Psoas muscle (tissue), 8 donors: ENCODE measurements at regions of chr11 and their contacts with region 1.

Region 1: GRCh38 chr11:107676336-107677057 is 35.4 kb downstream of the SLN start:
- DNase-seq: no peak
- ATAC-seq: no peak
- H3K4me3 ChIP-seq: no peak overlapping the region
- H3K27ac ChIP-seq: no peak overlapping the region
- H3K4me1 ChIP-seq: no peaks in the 10 kb centered on the region
- H3K27me3 ChIP-seq: no peaks in the 10 kb centered on the region
- CTCF ChIP-seq: no peak

Region 2: GRCh38 chr11:107631931-107632330 is 44.6 kb before region 1 on chr11:
- intact Hi-C with region 1: loop called in 1 of 2 experiments (anchors 5 kb)
- DNase-seq: no peak
- ATAC-seq: no peak
- H3K4me3 ChIP-seq: no peak overlapping the region
- H3K27ac ChIP-seq: no peak overlapping the region
- H3K4me1 ChIP-seq: no peaks in the 10 kb centered on the region
- H3K27me3 ChIP-seq: no peaks in the 10 kb centered on the region
- CTCF ChIP-seq: no peak

Region 3: DNA sequence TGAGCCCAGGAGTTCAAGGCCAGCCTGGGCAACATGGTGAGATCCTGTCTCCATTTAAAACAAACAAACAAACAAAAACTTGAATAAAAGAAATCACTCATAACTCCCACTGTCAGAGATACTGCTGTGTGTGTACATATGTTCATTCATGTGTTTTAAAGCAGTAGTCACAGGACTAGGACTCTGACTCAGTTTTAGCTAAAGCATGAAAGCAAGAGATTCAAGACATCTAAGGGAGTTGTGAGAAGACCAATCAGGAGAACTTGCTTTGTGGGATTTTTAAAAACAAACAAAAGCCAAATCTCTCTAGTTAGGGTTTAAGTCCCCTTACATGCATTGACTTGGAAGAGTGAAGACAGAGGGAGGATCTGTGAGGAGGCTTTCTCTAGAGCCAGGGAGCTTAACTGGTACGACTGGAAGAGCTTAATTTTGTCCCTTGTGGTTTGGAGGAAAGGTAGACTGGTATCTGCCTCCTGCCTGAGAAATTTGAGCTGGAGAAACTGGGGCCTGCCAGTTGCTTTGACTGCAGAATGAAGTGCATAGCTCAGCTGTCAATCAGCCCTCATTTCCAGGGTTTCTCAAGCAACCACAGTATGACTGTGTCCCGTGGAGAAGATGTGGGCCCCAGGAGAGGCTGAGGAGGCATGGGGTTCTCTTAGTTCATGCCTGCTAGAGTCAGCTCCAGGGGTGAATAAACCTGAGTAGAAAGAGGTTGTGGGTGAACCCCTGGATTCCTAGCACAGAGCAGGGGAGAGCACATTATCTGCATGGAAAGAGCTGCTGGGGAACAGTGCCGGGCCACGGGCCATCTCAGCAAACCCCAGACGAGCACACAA is 886.5 kb after region 1 on chr11:
- intact Hi-C with region 1: no loop called
- DNase-seq: no peak
- ATAC-seq: peak; percentile 63 to 92 (median 82)
- H3K4me3 ChIP-seq: no peak overlapping the region
- H3K27ac ChIP-seq: no peak overlapping the region
- H3K4me1 ChIP-seq: peaks cover 4% of the 10 kb centered on the region
- H3K27me3 ChIP-seq: no peaks in the 10 kb centered on the region
- CTCF ChIP-seq: no peak